RWPE1 (cell line): ENCODE measurements at regions of chr4 and their contacts with region 1.

Region 1: DNA sequence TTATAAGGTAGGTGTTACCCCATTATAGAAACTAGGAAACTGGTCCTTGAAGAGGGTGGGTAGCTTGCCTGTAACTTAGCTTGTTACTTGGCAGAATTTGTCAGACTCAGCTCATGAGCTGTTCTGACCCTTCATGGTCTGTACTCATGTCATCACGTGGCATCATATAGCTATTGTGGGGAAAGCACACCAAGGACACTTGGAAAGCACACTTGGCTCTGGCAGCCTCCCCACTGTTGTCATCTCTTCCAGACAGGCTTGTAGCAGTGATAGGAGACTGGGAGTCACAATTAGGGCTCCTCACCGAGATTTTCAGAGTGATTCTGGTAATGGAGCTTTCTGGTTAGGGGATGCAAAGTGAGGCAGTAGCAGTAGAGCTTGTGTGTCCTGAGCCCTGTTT is 30.4 kb downstream of the ADH5 start:
- DNase-seq: no peak
- H3K27ac ChIP-seq: no peak overlapping the region; the same call in 1 of the 2 replicates
- CTCF ChIP-seq: no peak

Region 2: GRCh38 chr4:98995183-98996055 is 62.8 kb before region 1 on chr4 and contains the start of gene METAP1:
- CTCF ChIA-PET with region 1: interaction called, 31 read pairs
- POLR2A ChIA-PET with region 1: no interaction called
- DNase-seq: peak; percentile 92
- H3K27ac ChIP-seq: peak within 1 kb of the TSS; percentile 89
- CTCF ChIP-seq: peak; percentile 86

Region 3: DNA sequence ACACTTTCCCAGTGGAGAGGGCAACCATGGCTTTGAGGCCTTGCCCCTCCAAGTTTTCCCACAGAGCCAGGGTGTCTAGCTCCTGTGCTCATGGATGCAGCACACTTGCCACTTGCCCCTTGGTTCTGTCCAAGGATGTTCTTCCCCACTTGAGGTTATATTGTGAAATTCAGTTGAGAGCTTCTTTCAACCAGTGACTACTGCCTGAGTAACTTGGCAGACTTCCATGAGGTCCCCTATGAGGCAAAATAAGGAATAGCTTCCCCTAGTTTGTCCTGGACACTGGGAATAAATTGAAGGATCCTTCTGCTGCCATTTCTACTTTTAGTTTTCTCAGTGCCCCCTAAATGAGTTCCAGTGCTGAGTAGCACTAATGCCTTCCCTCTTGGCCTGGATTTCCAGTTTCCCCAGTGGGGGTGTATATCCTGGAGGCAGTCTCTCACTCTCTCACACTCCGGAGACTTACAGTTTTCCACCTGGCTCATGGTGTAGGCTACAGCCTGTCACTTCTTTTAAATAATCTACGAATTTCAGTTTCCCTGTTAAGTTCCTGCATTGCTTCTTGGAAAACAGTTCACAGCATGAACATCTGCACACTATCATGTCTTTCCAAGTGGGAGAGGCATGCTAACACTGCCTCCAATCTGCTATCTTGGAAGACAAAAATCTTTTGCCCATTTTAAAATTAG is 122.3 kb after region 1 on chr4:
- CTCF ChIA-PET with region 1: no interaction called
- POLR2A ChIA-PET with region 1: no interaction called
- DNase-seq: peak; percentile 58
- H3K27ac ChIP-seq: no peak overlapping the region
- CTCF ChIP-seq: no peak